ENCODE measurements at regions of chr13 and their contacts with region 1.

Region 1: GRCh38 chr13:32195713-32196112 is 119.5 kb downstream of the ZAR1L start:
- DNase-seq: no peak
- ATAC-seq: no peak
- H3K4me3 ChIP-seq: no peak overlapping the region
- H3K27ac ChIP-seq: no peak overlapping the region
- H3K4me1 ChIP-seq: no peaks in the 10 kb centered on the region
- H3K27me3 ChIP-seq: no peaks in the 10 kb centered on the region
- CTCF ChIP-seq: no peak
- POLR2A ChIP-seq: no peak
- RAD21 ChIP-seq: no peak

Region 2: GRCh38 chr13:32164622-32165268 is 31.0 kb before region 1 on chr13:
- CTCF ChIA-PET with region 1: no interaction called
- POLR2A ChIA-PET with region 1: no interaction called
- dilution Hi-C with region 1: no loop called
- in situ Hi-C with region 1: no loop called
- intact Hi-C with region 1: loop called (anchors 5 kb)
- DNase-seq: peak; percentile 66
- ATAC-seq: peak; percentile 69
- H3K4me3 ChIP-seq: no peak overlapping the region
- H3K27ac ChIP-seq: peak overlapping the region; percentile 41; the same call in 1 of the 2 replicates
- H3K4me1 ChIP-seq: peaks cover 8% of the 10 kb centered on the region
- H3K27me3 ChIP-seq: no peaks in the 10 kb centered on the region
- CTCF ChIP-seq: peak; percentile 56
- POLR2A ChIP-seq: no peak
- RAD21 ChIP-seq: peak; percentile 55

Measured in IMR-90 (cell line).